Activated T-helper 2 cell treated with anti-CD3 and anti-CD28 coated beads, Interferon-gamma antibody, Interleukin-2, Interleukin-4, amounts not matched to agents 10 μg/mL and 5 μg/mL and 100 μg/mL, durations not matched to agents 14 hours and 24 hours and 36 hours (primary cell): ENCODE measurements at regions of chr6 and their contacts with region 1.

Region 1: GRCh38 chr6:32622545-32623401 is 14.4 kb upstream of the HLA-DQA1 start:
- DNase-seq: peak; percentile 31
- H3K4me3 Mint-ChIP-seq: peak overlapping the region; percentile 54
- H3K27ac Mint-ChIP-seq: peak overlapping the region; percentile 85
- H3K4me1 Mint-ChIP-seq: peaks cover 52% of the 10 kb centered on the region
- H3K27me3 Mint-ChIP-seq: no peaks in the 10 kb centered on the region

Region 2: GRCh38 chr6:31888276-31889258 is 734.2 kb before region 1 on chr6:
- intact Hi-C with region 1: no loop called
- DNase-seq: peak; percentile 33
- H3K4me3 Mint-ChIP-seq: no peak overlapping the region
- H3K27ac Mint-ChIP-seq: no peak overlapping the region
- H3K4me1 Mint-ChIP-seq: peaks cover 4% of the 10 kb centered on the region
- H3K27me3 Mint-ChIP-seq: no peaks in the 10 kb centered on the region

Region 3: DNA sequence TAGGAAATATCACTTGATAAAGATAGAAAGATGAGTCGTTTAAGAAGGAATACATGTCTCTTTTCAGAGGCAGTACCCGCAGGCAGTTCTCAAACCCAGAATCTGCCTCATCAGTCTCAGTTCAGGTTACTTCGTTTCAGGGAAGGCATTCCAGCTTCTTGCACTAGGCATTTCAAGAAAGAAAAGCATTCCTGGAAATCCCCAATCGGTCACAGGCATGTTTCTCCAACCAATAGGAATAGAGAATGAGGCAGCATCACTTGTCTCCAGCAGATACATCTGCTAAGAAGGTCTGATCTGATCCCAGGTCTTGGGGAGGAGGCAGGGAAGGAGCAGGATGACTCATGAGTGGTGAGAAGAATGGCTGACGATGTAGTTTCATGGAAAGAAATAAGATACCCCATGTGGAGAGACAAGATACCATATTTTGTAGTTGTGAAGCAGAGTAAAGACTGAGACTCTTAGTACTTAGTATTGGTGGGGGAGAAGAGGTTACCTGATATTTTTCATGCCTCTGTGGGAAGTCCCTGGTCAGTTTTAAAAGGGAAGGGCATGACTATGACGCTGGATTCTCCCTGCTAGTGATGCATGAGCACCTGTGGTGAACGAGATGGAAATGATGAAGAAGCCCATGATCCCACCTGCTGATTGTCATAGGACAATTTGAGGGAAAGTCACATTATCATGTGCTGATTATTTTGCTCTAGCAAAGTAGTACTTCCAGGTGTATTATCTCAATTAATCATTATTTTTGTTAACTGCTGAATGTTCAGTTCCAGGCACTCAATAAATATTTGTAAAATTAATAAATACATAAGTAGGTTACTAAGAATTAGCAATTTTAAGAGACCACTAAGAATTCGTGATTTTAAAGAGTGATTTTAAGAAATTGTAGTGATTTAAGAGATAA is 12.8 kb before region 1 on chr6:
- intact Hi-C with region 1: loop called (anchors 1 kb)
- DNase-seq: peak; percentile 50
- H3K4me3 Mint-ChIP-seq: no peak overlapping the region
- H3K27ac Mint-ChIP-seq: no peak overlapping the region
- H3K4me1 Mint-ChIP-seq: peaks cover 10% of the 10 kb centered on the region
- H3K27me3 Mint-ChIP-seq: peaks cover 10% of the 10 kb centered on the region

Region 4: DNA sequence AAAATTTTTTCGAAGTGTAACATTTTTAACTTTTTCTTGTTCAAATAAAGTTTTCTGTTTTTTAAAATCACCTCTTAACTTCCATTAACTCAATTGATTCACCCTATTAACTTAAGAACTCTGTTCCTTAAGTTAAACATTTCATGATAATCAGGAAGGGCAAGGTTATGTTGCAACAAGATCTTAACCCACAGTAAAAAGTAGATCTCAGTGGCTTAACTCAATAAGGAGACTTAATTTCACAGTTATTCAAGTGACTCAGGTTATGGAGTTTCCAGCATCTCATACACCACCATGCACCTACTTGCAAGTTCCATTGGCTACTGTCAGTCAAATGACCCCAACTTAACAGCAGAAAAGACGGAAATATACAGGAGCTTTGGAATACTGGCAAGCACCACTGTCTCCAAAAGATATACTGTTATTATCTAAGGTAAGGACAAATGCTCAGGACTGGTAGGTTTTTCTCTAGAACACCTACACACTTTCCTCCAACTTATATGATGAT is 32.5 kb after region 1 on chr6:
- intact Hi-C with region 1: no loop called
- DNase-seq: no peak
- H3K4me3 Mint-ChIP-seq: no peak overlapping the region
- H3K27ac Mint-ChIP-seq: no peak overlapping the region
- H3K4me1 Mint-ChIP-seq: peaks cover 22% of the 10 kb centered on the region
- H3K27me3 Mint-ChIP-seq: peaks cover 14% of the 10 kb centered on the region

Region 5: GRCh38 chr6:32666420-32667300 is 43.9 kb after region 1 on chr6 and contains the start of gene HLA-DQB1:
- intact Hi-C with region 1: loop called (anchors 2 kb)
- DNase-seq: peak; percentile 46
- H3K4me3 Mint-ChIP-seq: peak within 1 kb of the TSS; percentile 81
- H3K27ac Mint-ChIP-seq: peak within 1 kb of the TSS; percentile 74
- H3K4me1 Mint-ChIP-seq: peaks cover 46% of the 10 kb centered on the region
- H3K27me3 Mint-ChIP-seq: peaks cover 35% of the 10 kb centered on the region
- total RNA-seq, gene HLA-DQB1: 1.6 and 2.7 TPM in 2 replicates

Region 6: DNA sequence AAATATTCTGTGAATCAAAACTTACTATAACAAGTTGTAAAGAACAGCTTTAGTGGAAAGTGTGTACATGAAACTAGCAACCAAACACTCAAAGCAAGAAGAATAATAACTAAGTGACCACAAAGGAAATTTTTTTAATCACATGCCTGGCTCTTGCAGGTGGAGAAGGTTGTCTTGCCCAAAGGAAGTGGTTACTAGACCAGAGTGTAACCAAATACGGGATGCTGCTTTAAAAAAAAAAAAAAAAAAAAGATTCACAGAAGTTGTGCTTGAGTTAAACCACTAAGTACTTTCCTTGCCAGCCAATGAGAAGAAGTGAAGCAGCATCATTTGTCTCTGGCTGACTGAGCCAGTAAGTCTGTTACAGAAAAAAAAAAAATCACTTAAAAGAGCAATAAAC is 62.8 kb after region 1 on chr6:
- intact Hi-C with region 1: loop called (anchors 1 kb)
- DNase-seq: peak; percentile 45
- H3K4me3 Mint-ChIP-seq: no peak overlapping the region
- H3K27ac Mint-ChIP-seq: no peak overlapping the region
- H3K4me1 Mint-ChIP-seq: peaks cover 25% of the 10 kb centered on the region
- H3K27me3 Mint-ChIP-seq: peaks cover 38% of the 10 kb centered on the region

Region 7: DNA sequence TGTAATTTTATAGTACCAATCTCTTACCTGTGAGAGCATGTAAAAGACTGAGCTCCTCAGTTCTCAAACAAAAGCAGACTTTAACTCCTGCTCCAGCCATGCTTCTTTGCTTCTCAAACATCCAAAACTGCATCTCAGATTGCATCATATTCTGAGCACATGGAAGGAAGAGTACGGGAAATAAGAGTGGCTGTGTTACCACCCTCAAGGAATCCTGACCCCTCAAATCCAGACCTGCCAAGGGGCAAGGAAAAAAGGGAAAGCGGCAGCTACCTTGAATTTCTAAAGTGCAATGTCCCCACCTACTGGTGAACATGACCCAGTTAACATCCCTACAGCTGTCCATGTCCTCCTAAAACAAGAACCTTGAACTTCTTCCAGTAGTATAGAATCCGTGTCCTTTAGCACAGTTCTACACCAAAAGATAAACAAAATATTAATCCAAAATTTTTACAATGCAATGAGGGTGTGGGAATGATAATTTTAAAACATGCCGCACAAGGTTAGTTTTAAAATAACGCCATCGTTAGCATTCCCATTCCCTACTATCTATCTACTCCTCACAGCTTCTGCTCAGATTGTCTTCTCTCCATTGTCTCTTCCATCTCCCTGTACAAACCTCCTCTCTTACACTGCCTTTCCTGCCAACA is 77.7 kb after region 1 on chr6:
- intact Hi-C with region 1: no loop called
- DNase-seq: no peak
- H3K4me3 Mint-ChIP-seq: no peak overlapping the region
- H3K27ac Mint-ChIP-seq: no peak overlapping the region
- H3K4me1 Mint-ChIP-seq: peaks cover 4% of the 10 kb centered on the region
- H3K27me3 Mint-ChIP-seq: peaks cover 64% of the 10 kb centered on the region